Activated CD8-positive, alpha-beta T cell treated with anti-CD3 and anti-CD28 coated beads for 36 hours (primary cell): ENCODE measurements at regions of chr14 and their contacts with region 1.

Region 1: DNA sequence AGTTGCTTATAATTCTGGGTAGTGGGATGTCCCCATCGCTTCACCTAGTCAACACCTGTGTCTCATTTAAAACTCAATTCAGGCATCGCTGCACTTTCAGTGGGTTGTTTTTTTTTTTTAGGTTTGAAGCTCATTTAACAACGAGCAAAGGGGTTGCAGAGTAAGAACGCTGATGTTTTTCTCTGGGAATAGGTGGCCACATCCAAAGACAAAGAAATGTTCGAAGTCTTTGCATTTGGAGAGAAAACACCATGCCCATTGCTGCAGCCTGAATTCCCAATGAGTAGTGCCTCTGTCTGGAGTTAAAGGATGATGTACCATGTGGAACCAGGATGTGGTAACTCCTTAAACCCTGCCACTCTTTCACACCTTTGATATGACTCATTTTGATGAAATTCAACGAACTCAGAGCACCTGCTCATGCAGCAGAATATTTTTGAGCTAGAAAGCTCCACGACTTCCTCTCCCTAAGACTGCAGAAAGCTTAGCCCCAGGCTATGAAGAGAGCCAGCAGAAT is 35.1 kb upstream of the BATF start:
- DNase-seq: peak; percentile 32
- ATAC-seq: peak; percentile 86
- H3K4me3 Mint-ChIP-seq: no peak overlapping the region
- H3K27ac Mint-ChIP-seq: no peak overlapping the region
- H3K4me1 Mint-ChIP-seq: peaks cover 20% of the 10 kb centered on the region
- H3K27me3 Mint-ChIP-seq: no peaks in the 10 kb centered on the region
- CTCF ChIP-seq: no peak

Region 2: DNA sequence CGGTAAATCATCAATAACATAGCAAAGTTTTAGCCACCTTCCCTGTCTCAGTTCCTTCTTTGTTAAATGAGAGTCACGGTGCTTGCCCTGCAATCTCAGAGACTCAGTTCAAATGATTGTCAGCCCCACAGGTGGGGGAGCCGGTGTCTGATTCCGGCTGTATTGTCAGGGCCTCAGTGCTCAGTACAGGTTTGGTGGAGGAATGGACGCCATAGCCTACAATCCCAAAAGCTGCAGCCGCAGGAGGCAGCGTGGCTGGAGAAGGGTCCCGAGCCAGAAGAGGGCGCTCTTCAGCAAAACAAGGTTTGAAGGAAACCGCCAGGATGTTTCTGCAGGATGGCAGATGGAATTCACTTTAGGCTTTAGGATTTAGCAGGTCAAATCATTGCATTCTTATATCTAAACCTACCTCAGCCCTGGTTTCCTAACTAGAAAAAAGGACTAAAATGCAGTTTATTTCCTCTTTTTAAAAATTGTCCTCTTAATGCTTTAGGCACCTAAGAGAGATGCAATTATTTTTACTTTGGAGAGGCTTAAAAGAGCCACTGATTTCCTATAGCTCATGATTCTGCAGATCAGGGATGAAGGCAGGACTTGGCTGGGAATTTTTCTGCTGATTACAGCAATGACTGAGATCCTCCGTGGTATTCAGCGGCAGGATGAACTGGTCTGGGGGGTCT is 179.4 kb before region 1 on chr14:
- CTCF ChIA-PET with region 1: interaction called, 30 read pairs
- POLR2A ChIA-PET with region 1: no interaction called
- intact Hi-C with region 1: loop called (anchors 1 kb)
- DNase-seq: peak; percentile 82
- ATAC-seq: peak; percentile 62
- H3K4me3 Mint-ChIP-seq: no peak overlapping the region
- H3K27ac Mint-ChIP-seq: no peak overlapping the region
- H3K4me1 Mint-ChIP-seq: peaks cover 13% of the 10 kb centered on the region
- H3K27me3 Mint-ChIP-seq: peaks cover 1% of the 10 kb centered on the region
- CTCF ChIP-seq: peak; percentile 97

Region 3: DNA sequence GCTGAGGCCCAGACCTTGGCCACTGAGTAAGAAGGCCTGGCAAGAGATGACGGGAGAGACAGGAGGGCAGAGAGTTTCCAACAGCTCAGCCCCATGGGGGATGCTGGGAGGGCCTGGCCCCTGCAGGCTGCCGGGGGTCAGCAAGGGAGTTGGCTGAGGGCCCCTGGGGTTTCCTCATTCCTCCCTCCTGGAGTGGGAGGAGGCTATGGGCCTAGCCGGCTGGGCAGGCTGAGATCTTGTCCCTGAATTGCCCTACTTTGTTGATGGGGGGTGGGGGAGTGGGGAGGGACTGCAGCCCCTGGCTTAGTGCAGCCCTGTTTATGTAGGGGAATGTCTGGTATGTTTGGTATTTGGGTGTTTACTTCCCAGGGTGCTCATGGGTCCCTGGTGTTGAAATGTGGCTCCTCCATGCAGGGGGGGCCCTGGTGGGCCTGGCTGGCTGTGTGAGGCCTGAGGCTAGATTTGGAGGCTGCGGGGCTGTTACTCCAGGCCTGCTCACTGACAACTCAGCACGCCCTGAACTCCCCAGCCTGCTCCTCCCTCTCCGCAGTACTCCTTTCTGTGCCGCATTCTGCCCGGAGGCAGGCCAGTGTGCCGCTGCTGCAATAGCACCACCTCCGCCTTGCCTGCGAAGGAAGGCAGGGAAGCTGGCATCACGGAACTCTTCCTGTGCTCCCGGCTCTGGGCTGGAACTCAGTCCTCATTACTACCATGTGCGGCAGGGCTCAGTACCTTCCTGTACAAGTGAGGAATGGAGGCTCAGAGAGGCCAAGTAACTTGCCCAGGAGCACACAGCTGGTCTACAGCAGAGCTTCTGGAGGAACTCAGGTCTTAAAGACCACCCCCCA is 34.1 kb before region 1 on chr14:
- CTCF ChIA-PET with region 1: interaction called, 10 read pairs
- POLR2A ChIA-PET with region 1: no interaction called
- intact Hi-C with region 1: no loop called
- DNase-seq: no peak
- ATAC-seq: no peak
- H3K4me3 Mint-ChIP-seq: no peak overlapping the region
- H3K27ac Mint-ChIP-seq: no peak overlapping the region
- H3K4me1 Mint-ChIP-seq: no peaks in the 10 kb centered on the region
- H3K27me3 Mint-ChIP-seq: peaks cover 2% of the 10 kb centered on the region
- CTCF ChIP-seq: no peak

Region 4: GRCh38 chr14:75514673-75515628 is 27.7 kb after region 1 on chr14:
- CTCF ChIA-PET with region 1: interaction called, 28 read pairs
- POLR2A ChIA-PET with region 1: interaction called, 4 read pairs
- intact Hi-C with region 1: no loop called
- DNase-seq: peak; percentile 66
- ATAC-seq: peak; percentile 67
- H3K4me3 Mint-ChIP-seq: peak overlapping the region; percentile 68
- H3K27ac Mint-ChIP-seq: peak overlapping the region; percentile 93
- H3K4me1 Mint-ChIP-seq: peaks cover 42% of the 10 kb centered on the region
- H3K27me3 Mint-ChIP-seq: no peaks in the 10 kb centered on the region
- CTCF ChIP-seq: peak; percentile 51

Region 5: GRCh38 chr14:75542588-75543091 is 55.4 kb after region 1 on chr14:
- CTCF ChIA-PET with region 1: interaction called, 13 read pairs
- POLR2A ChIA-PET with region 1: interaction called, 3 read pairs
- intact Hi-C with region 1: no loop called
- DNase-seq: peak; percentile 90
- ATAC-seq: peak; percentile 89
- H3K4me3 Mint-ChIP-seq: peak overlapping the region; percentile 54
- H3K27ac Mint-ChIP-seq: peak overlapping the region; percentile 96
- H3K4me1 Mint-ChIP-seq: peaks cover 57% of the 10 kb centered on the region
- H3K27me3 Mint-ChIP-seq: no peaks in the 10 kb centered on the region
- CTCF ChIP-seq: no peak